Tibial artery (tissue), 4 donors: ENCODE measurements at regions of chr2 and their contacts with region 1.

Region 1: GRCh38 chr2:135386993-135387392 is 144.0 kb downstream of the ZRANB3 start:
- DNase-seq: no peak
- H3K4me3 ChIP-seq: no peak overlapping the region
- H3K27ac ChIP-seq: no peak overlapping the region
- H3K4me1 ChIP-seq: no peaks in the 10 kb centered on the region
- H3K27me3 ChIP-seq: no peaks in the 10 kb centered on the region
- CTCF ChIP-seq: no peak

Region 2: GRCh38 chr2:133791191-133791590 is 1595.8 kb before region 1 on chr2:
- intact Hi-C with region 1: no loop called
- DNase-seq: no peak
- H3K4me3 ChIP-seq: no peak overlapping the region
- H3K27ac ChIP-seq: no peak overlapping the region
- H3K4me1 ChIP-seq: no peaks in the 10 kb centered on the region
- H3K27me3 ChIP-seq: no peaks in the 10 kb centered on the region
- CTCF ChIP-seq: no peak

Region 3: GRCh38 chr2:135132314-135132713 is 254.7 kb before region 1 on chr2:
- intact Hi-C with region 1: loop called (anchors 5 kb)
- DNase-seq: no peak
- H3K4me3 ChIP-seq: no peak overlapping the region
- H3K27ac ChIP-seq: no peak overlapping the region
- H3K4me1 ChIP-seq: no peaks in the 10 kb centered on the region
- H3K27me3 ChIP-seq: no peaks in the 10 kb centered on the region
- CTCF ChIP-seq: no peak